Activated T-helper 1 cell treated with anti-CD3 and anti-CD28 coated beads, Interleukin-12 subunit alpha, Interleukin-12 subunit beta, Interleukin-2, Interleukin-4 antibody, amounts not matched to agents 30 ng/mL and 10 ng/mL and 1 ng/mL, durations not matched to agents 14 hours and 24 hours and 36 hours (primary cell): ENCODE measurements at regions of chr5 and their contacts with region 1.

Region 1: DNA sequence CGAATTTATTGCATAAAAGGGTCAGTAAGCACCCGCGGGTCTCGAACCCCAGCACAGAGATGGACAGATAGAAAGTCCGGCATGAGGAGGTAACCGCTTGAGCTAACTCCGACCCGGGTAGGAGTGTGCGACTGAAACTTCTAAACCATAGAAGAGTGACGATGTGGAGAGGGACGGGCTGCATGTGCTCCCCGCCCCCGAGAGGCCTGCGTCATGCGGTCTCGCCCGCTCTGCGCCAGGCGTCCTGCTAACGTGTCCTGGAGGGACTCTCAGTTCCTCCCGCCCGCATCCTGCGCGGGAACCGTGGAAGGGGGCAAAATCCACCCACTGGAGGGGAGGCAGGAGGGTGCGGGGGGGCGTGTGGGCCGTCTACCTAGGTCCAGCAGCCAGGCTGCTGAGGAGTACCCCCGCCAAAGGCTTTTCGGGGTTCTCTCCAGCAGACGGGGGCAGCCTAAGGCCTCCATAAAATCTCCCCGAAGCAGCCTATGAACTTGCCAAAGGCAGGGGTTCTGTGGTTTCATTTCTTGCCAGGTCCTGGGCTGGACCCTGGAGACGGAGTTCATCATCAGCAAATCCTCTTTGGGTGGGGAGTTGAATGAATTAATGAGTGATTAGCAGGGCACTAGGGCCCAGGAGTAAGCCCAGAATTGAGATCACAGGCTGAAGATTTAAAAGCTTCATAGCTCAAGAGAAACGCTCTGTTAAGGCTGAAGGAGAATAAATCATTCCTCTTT is 51.9 kb downstream of the TGFBI start:
- DNase-seq: peak; percentile 59
- H3K4me3 Mint-ChIP-seq: peak overlapping the region; percentile 65
- H3K27ac Mint-ChIP-seq: peak overlapping the region; percentile 83
- H3K4me1 Mint-ChIP-seq: peaks cover 14% of the 10 kb centered on the region
- H3K27me3 Mint-ChIP-seq: peaks cover 41% of the 10 kb centered on the region

Region 2: GRCh38 chr5:135887351-135887864 is 193.2 kb before region 1 on chr5:
- intact Hi-C with region 1: loop called (anchors 1 kb)
- DNase-seq: peak; percentile 53
- H3K4me3 Mint-ChIP-seq: no peak overlapping the region
- H3K27ac Mint-ChIP-seq: no peak overlapping the region
- H3K4me1 Mint-ChIP-seq: peaks cover 14% of the 10 kb centered on the region
- H3K27me3 Mint-ChIP-seq: peaks cover 18% of the 10 kb centered on the region

Region 3: DNA sequence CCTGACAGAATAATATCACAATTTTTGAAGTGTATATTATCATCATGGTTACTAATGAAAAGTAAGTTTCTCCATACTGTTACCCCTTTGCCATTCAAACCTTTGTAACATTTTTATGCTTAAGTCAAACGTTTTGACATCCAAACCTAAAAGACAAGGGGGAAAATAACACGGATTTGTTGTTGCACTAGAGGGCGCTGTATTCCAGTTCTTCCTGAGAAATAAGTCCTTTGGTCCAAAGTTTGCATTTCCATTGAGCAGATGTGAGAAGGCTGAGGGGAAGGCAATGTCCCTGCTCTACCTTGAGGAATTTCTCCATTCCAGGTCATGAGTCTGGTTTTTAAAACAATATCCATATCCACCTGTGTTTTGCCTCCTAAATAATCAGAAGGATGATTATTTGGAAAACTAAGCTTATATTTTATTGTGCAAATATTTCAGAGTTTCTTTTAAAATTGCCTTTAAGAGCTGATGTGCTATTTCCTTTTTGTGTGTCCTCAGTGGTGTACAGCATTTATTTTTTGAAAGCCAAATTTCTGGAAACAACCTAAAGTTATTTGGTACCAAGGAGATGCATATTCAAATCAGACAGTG is 135.6 kb before region 1 on chr5:
- intact Hi-C with region 1: loop called (anchors 1 kb)
- DNase-seq: no peak
- H3K4me3 Mint-ChIP-seq: no peak overlapping the region
- H3K27ac Mint-ChIP-seq: no peak overlapping the region
- H3K4me1 Mint-ChIP-seq: no peaks in the 10 kb centered on the region
- H3K27me3 Mint-ChIP-seq: peaks cover 9% of the 10 kb centered on the region

Region 4: DNA sequence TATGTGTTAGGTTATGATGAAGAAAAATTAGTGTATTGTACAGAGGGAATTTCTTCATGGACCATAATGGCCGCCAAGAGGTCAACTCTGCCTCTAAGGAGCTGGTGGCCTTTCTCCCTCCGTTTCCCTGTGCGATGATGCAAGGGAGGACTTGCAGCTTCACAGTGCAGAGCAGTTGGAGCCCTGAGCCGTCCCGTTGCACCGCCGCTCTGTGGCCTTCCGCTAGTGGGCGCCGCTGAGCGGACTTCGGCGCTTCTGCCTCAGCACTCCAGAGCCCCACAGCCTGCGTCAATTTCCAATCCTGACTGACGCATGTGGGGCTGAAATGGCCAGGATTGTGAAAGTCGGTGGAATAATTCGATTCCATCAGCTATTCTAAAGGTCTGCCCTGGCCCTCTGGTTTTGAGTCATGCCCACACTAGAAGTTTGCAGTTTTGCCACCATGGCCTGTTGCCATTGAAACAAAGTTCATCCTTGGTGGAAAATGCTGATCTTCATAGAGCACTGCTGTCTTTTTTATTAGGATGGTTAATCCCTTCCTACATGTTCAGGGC is 103.2 kb before region 1 on chr5:
- intact Hi-C with region 1: loop called (anchors 2 kb)
- DNase-seq: no peak
- H3K4me3 Mint-ChIP-seq: no peak overlapping the region
- H3K27ac Mint-ChIP-seq: no peak overlapping the region
- H3K4me1 Mint-ChIP-seq: no peaks in the 10 kb centered on the region
- H3K27me3 Mint-ChIP-seq: peaks cover 15% of the 10 kb centered on the region

Region 5: GRCh38 chr5:136037001-136037705 is 43.5 kb before region 1 on chr5:
- intact Hi-C with region 1: loop called (anchors 1 kb)
- DNase-seq: peak; percentile 5
- H3K4me3 Mint-ChIP-seq: no peak overlapping the region
- H3K27ac Mint-ChIP-seq: no peak overlapping the region
- H3K4me1 Mint-ChIP-seq: peaks cover 17% of the 10 kb centered on the region
- H3K27me3 Mint-ChIP-seq: no peaks in the 10 kb centered on the region

Region 6: GRCh38 chr5:136132557-136133221 is 52.0 kb after region 1 on chr5 and contains the start of gene SMAD5:
- intact Hi-C with region 1: loop called (anchors 1 kb)
- DNase-seq: peak; percentile 78
- H3K4me3 Mint-ChIP-seq: peak within 1 kb of the TSS; percentile 89
- H3K27ac Mint-ChIP-seq: peak within 1 kb of the TSS; percentile 68
- H3K4me1 Mint-ChIP-seq: peaks cover 20% of the 10 kb centered on the region
- H3K27me3 Mint-ChIP-seq: peaks cover 50% of the 10 kb centered on the region
- total RNA-seq, gene SMAD5: 17.9 TPM in 2 replicates

Region 7: DNA sequence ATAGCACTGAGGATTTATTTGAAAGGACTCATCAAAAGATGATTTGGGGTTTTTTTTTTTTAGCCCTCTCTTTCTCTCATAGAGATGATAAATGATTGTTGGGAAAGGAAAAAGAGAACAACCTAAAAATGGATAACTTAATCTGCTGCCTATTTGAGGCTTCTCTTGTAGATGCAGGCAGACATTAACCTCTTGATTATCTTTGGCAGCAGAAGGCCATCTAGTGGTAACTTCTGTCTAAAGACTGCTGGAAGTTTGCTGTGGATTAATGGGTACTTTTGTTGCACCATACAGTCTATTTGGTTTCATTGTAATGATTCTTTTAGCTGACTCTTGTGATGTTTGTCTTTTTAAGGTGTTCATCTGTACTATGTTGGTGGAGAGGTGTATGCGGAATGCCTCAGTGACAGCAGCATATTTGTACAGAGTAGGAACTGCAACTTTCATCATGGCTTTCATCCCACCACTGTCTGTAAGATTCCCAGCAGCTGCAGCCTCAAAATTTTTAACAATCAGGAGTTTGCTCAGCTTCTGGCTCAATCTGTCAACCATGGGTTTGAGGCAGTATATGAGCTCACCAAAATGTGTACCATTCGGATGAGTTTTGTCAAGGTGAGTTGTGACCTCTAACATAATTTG is 93.5 kb after region 1 on chr5:
- intact Hi-C with region 1: loop called (anchors 1 kb)
- DNase-seq: no peak
- H3K4me3 Mint-ChIP-seq: no peak overlapping the region
- H3K27ac Mint-ChIP-seq: no peak overlapping the region
- H3K4me1 Mint-ChIP-seq: no peaks in the 10 kb centered on the region
- H3K27me3 Mint-ChIP-seq: no peaks in the 10 kb centered on the region